Stomach (tissue), 19 donors: ENCODE measurements at regions of chr9 and their contacts with region 1.

Region 1: DNA sequence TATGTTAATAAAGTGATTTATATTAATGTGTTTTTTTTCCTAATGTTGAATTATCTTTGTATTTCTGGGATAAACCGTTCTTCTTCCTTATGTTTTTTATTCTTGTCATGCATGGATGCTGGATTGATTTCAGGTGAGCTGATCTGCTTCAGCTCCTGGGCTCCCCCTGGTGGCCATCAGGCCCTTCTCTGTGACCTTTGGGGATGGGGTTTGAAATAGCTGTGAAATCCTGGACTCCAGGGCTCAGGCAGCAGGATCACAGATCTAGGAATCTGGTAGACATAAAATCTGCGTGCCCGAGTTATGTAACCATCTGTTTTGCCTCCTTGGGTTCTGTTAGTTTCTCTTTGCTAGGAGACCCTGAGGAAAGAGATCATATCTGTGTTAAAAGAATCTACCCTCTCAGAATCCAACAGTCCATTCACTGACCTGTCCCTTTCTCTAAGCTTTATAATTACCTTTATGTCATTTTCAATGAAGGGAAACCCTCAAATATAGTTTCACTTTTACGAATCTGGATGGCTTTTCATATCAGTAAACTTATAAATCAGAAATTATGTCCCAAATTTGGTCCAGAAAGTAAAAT is 12.2 kb upstream of the OR13J1 start:
- DNase-seq: peak; percentile 90 to 92
- H3K4me3 ChIP-seq: no peak overlapping the region
- H3K27ac ChIP-seq: no peak overlapping the region
- H3K4me1 ChIP-seq: no peaks in the 10 kb centered on the region
- H3K27me3 ChIP-seq: peaks cover 0 to 5% (median 0%) of the 10 kb centered on the region in 3 donors
- CTCF ChIP-seq: peak in 5 of 7 experiments; percentile 87 to 96 (median 91)
- EP300 ChIP-seq: no peak
- POLR2A ChIP-seq: no peak

Region 2: GRCh38 chr9:35790385-35791296 is 91.7 kb before region 1 on chr9:
- intact Hi-C with region 1: loop called (anchors 5 kb)
- DNase-seq: peak; percentile 68 to 93
- H3K4me3 ChIP-seq: peak overlapping the region; percentile 41 to 51 (median 48)
- H3K27ac ChIP-seq: peak overlapping the region; percentile 7 to 84 (median 74)
- H3K4me1 ChIP-seq: peaks cover 37 to 55% (median 46%) of the 10 kb centered on the region in 4 donors
- H3K27me3 ChIP-seq: peaks cover 0 to 5% (median 0%) of the 10 kb centered on the region in 3 donors
- CTCF ChIP-seq: peak in 5 of 7 experiments; percentile 80 to 95 (median 90)
- EP300 ChIP-seq: no peak
- POLR2A ChIP-seq: no peak

Region 3: GRCh38 chr9:36039696-36040095 is 157.3 kb after region 1 on chr9:
- intact Hi-C with region 1: no loop called
- DNase-seq: no peak
- H3K4me3 ChIP-seq: no peak overlapping the region
- H3K27ac ChIP-seq: peak overlapping the region in 2 of 5 donors; percentile 17 to 38
- H3K4me1 ChIP-seq: peaks cover 0 to 60% (median 36%) of the 10 kb centered on the region in 4 donors
- H3K27me3 ChIP-seq: peaks cover 0 to 17% (median 9%) of the 10 kb centered on the region in 3 donors
- CTCF ChIP-seq: no peak
- EP300 ChIP-seq: no peak
- POLR2A ChIP-seq: no peak